Right cardiac atrium (tissue), 5 donors: ENCODE measurements at regions of chr7 and their contacts with region 1.

Region 1: DNA sequence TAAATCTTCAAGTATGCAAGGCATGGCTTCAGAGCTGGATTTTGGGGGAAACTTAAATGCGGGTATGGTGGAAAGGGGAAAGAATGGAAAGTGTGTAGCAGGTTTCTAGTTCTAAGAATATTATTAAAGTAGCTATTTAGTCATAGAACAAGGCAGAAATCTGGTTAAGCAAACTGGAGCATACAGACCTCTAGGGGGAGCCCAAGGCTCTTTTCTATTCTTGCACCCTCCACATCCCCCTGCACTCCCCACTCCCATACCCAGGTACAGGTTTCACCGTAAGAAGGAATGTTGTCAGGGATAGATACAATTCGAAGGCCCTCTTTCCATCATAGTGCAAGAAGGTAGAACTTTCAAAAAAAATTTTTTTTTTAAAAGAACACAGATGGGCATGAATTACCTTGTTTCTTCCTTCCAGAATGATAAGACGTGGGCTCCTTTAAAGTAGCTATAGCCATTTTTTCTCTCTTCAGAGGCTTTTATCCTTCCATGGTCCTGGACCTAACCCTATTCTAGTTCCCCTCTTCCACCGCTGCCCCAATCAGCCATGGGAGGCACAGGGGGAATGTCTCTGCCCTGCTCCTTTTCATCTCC is 41.5 kb upstream of the SMIM30 start:
- DNase-seq: no peak
- ATAC-seq: peak; percentile 43 to 47
- H3K4me3 ChIP-seq: no peak overlapping the region
- H3K27ac ChIP-seq: no peak overlapping the region
- H3K4me1 ChIP-seq: no peaks in the 10 kb centered on the region
- H3K27me3 ChIP-seq: no peaks in the 10 kb centered on the region

Region 2: GRCh38 chr7:113118074-113118959 is 41.5 kb before region 1 on chr7 and contains the start of gene SMIM30:
- intact Hi-C with region 1: loop called in 1 of 4 experiments (anchors 5 kb)
- DNase-seq: peak; percentile 94 to 97 (median 96)
- ATAC-seq: peak; percentile 100
- H3K4me3 ChIP-seq: peak within 1 kb of the TSS; percentile 98
- H3K27ac ChIP-seq: peak within 1 kb of the TSS; percentile 51
- H3K4me1 ChIP-seq: no peaks in the 10 kb centered on the region
- H3K27me3 ChIP-seq: no peaks in the 10 kb centered on the region
- total RNA-seq, gene SMIM30: 107 to 135 (median 111) TPM

Region 3: DNA sequence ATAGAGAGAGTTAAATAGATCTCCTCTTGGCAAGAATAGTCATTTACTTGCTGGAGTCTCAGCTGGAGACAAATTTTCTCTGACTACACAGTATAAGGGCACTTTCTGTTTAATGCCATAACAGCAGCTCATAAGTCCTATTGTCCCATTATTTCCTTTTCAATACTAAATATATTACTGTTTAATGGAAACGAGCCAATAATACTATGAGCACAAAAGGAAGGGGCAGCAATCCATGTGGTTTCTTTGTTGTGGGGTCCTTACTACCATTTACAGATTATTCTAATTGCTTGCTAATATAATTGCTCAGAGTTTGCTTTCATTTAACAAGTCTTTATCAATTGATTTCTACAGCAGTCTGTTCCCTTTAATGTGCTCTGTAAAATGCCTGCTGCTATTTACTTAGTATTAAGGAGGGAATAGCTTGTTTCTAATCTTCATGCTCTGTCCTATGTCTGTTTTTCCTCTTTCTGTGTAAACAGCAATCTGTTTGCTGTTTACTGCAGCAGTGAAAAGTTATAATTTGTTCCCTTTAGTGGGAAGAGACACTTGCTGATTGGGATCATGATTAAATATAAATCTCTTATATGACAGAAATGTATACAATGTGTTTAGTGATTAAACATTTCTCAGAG is 254.7 kb after region 1 on chr7:
- intact Hi-C with region 1: loop called in 1 of 4 experiments (anchors 10 kb)
- DNase-seq: no peak
- ATAC-seq: no peak
- H3K4me3 ChIP-seq: no peak overlapping the region
- H3K27ac ChIP-seq: no peak overlapping the region
- H3K4me1 ChIP-seq: no peaks in the 10 kb centered on the region
- H3K27me3 ChIP-seq: no peaks in the 10 kb centered on the region